ENCODE measurements at regions of chr19 and their contacts with region 1.

Region 1: GRCh38 chr19:46717034-46717723 is at the start of gene PRKD2:
- DNase-seq: peak; percentile 76
- H3K4me3 Mint-ChIP-seq: peak within 1 kb of the TSS; percentile 97
- H3K27ac Mint-ChIP-seq: peak within 1 kb of the TSS; percentile 99
- H3K4me1 Mint-ChIP-seq: no peaks in the 10 kb centered on the region
- H3K27me3 Mint-ChIP-seq: no peaks in the 10 kb centered on the region
- CTCF ChIP-seq: no peak
- total RNA-seq, gene PRKD2: 30.4 and 35.9 TPM in 2 replicates

Region 2: DNA sequence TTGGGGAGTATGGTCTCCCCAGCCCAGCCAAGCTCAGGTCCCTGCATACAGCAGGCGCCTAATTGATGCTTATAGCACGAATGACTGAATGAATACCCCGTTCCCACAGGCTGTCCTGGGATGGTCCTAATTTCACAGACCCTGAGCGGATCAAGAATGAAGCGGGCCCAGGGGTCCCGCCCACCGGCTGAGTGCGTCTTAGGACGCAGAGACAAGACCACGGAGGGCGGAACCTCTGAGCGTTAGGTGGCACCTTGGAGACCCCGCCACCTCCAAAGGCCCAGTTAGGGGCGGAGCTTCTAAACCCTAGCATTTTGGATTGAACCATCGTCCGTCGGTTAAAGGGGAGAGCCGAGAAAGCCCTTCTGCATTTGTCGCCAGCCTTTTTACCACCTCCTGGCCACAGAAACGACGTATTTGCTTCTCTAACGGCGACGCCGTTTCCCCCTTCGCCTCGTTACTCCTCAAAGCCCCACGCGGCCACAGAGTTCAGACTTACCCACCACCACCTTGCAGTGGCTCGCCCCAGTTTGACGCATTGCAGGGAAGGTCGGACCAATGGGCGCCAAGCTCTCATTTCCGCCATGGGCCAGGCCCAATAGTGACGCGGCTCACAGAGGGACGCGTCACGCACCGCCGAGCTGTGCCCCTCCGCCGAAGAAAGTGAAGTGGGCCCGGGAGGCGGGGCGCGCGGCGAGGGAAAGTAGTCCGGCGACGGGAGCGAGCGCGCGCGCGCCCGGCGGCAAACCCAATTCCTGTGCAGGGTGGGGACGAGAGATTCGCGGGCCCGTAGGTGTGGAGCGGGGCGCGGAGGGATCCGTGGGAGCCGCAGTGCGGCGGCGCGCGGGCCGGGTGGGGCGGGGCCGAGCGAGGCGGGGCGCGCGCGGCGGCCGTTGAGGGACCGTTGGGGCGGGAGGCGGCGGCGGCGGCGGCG is 116.5 kb before region 1 on chr19:
- CTCF ChIA-PET with region 1: no interaction called
- POLR2A ChIA-PET with region 1: interaction called, 40 read pairs
- intact Hi-C with region 1: no loop called
- DNase-seq: peak; percentile 98
- H3K4me3 Mint-ChIP-seq: peak overlapping the region; percentile 96
- H3K27ac Mint-ChIP-seq: peak overlapping the region; percentile 100
- H3K4me1 Mint-ChIP-seq: peaks cover 4% of the 10 kb centered on the region
- H3K27me3 Mint-ChIP-seq: no peaks in the 10 kb centered on the region
- CTCF ChIP-seq: no peak

Measured in MCF 10A (cell line).